Endothelial cell of umbilical vein (primary cell): ENCODE measurements at regions of chr14 and their contacts with region 1.

Region 1: DNA sequence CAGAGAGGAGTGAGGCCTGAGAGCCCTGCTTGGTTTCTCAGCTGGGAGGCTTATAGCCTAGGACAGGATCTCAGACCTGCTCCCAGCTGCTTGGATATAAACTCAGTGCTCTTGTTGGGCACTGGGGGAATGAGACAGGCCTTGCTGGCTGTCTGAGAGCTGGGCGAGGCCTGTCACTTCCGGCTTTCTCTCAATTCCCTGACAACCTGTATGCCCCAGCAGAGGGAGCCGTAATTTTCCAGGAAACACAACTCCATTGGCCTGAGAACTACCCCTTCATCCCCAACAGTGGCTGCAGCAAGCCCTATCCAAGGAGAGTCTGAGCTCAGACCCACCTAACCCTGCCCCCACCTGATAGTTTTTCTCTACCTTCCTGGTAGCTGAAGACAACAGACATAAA is 258.3 kb upstream of the STXBP6 start:
- DNase-seq: no peak
- H3K4me3 ChIP-seq: no peak overlapping the region
- H3K27ac ChIP-seq: no peak overlapping the region
- H3K4me1 ChIP-seq: no peaks in the 10 kb centered on the region
- H3K27me3 ChIP-seq: no peaks in the 10 kb centered on the region
- CTCF ChIP-seq: peak in 1 of 2 donors; percentile 21
- POLR2A ChIP-seq: no peak

Region 2: GRCh38 chr14:25406818-25407217 is 98.6 kb after region 1 on chr14:
- CTCF ChIA-PET with region 1: interaction called, 18 read pairs
- POLR2A ChIA-PET with region 1: no interaction called
- dilution Hi-C with region 1: no loop called
- intact Hi-C with region 1: loop called (anchors 1 kb)
- DNase-seq: peak; percentile 48
- H3K4me3 ChIP-seq: no peak overlapping the region
- H3K27ac ChIP-seq: no peak overlapping the region
- H3K4me1 ChIP-seq: no peaks in the 10 kb centered on the region
- H3K27me3 ChIP-seq: no peaks in the 10 kb centered on the region
- CTCF ChIP-seq: peak; percentile 59 to 63
- POLR2A ChIP-seq: no peak